Activated CD8-positive, alpha-beta T cell treated with anti-CD3 and anti-CD28 coated beads, Interleukin-2, amount 10 ng/mL, durations not matched to agents 7 days and 5 days (primary cell): ENCODE measurements at regions of chr3 and their contacts with region 1.

Region 1: GRCh38 chr3:4738737-4739274 is 240.4 kb upstream of the BHLHE40 start:
- DNase-seq: no peak
- ATAC-seq: no peak
- H3K4me3 Mint-ChIP-seq: peak overlapping the region; percentile 6
- H3K27ac Mint-ChIP-seq: peak overlapping the region; percentile 97
- H3K4me1 Mint-ChIP-seq: peaks cover 84% of the 10 kb centered on the region
- H3K27me3 Mint-ChIP-seq: no peaks in the 10 kb centered on the region

Region 2: GRCh38 chr3:4722103-4722502 is 16.7 kb before region 1 on chr3:
- CTCF ChIA-PET with region 1: interaction called, 10 read pairs
- POLR2A ChIA-PET with region 1: interaction called, 4 read pairs
- DNase-seq: peak; percentile 61
- ATAC-seq: peak; percentile 85
- H3K4me3 Mint-ChIP-seq: no peak overlapping the region
- H3K27ac Mint-ChIP-seq: peak overlapping the region; percentile 66
- H3K4me1 Mint-ChIP-seq: peaks cover 62% of the 10 kb centered on the region
- H3K27me3 Mint-ChIP-seq: no peaks in the 10 kb centered on the region

Region 3: DNA sequence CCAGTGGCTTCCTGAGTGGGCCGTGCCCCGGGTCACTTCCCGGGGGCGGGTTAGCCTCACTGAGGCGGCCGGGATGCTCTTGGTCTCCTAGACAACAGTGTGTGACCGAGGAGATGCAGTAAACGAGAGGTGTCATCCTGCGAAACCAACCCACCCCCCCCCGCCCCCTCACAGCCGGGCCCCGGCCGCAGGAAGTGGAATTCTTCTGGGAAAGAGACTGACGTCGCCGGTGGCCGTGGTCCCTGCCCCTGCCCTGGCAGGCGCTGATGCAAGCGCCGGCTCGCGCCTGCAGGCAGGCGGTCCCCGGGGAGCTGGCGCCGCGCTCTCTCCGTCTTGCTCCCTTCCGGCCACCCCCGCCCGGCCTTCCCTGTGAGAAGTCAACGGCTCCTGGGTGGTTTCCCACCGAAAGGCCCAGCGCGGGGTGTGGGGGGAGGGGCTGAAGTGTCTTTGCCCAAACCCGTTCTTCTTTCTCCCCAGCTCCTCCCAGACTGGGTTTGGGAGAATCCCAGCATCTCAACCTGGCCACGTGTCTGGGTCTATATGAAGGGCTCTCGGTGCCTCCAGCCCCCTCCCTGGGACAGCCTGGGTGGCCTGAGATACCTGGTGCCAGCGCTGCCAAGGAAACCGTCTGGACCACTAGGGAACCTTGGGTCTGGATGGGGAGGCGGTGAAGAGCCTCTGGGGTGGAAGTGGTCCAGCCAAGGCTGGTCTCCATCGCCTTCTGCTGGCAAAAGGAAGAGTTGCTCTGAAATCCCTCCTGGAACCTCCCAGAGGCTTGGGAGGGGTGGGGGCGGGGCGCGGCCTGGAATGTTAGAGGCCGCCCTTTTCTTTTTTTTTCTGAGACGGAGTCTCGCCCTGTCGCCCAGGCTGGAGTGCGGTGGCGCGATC is 287.8 kb after region 1 on chr3:
- CTCF ChIA-PET with region 1: no interaction called
- POLR2A ChIA-PET with region 1: no interaction called
- DNase-seq: peak; percentile 68
- ATAC-seq: peak; percentile 77
- H3K4me3 Mint-ChIP-seq: peak overlapping the region; percentile 76
- H3K27ac Mint-ChIP-seq: peak overlapping the region; percentile 86
- H3K4me1 Mint-ChIP-seq: peaks cover 56% of the 10 kb centered on the region
- H3K27me3 Mint-ChIP-seq: no peaks in the 10 kb centered on the region